MCF 10A (cell line): ENCODE measurements at regions of chr2 and their contacts with region 1.

Region 1: GRCh38 chr2:99337113-99338028 is at the start of gene EIF5B:
- DNase-seq: peak; percentile 96
- H3K4me3 Mint-ChIP-seq: no peak within 1 kb of the TSS
- H3K27ac Mint-ChIP-seq: no peak within 1 kb of the TSS
- H3K4me1 Mint-ChIP-seq: peaks cover 20% of the 10 kb centered on the region
- H3K27me3 Mint-ChIP-seq: no peaks in the 10 kb centered on the region
- CTCF ChIP-seq: peak; percentile 42
- total RNA-seq, gene EIF5B: 45.6 and 55.5 TPM in 2 replicates

Region 2: GRCh38 chr2:99032786-99033185 is 304.6 kb before region 1 on chr2:
- CTCF ChIA-PET with region 1: no interaction called
- POLR2A ChIA-PET with region 1: no interaction called
- intact Hi-C with region 1: no loop called
- DNase-seq: peak; percentile 46
- H3K4me3 Mint-ChIP-seq: no peak overlapping the region
- H3K27ac Mint-ChIP-seq: no peak overlapping the region
- H3K4me1 Mint-ChIP-seq: peaks cover 12% of the 10 kb centered on the region
- H3K27me3 Mint-ChIP-seq: no peaks in the 10 kb centered on the region
- CTCF ChIP-seq: no peak

Region 3: GRCh38 chr2:99141110-99142108 is 196.0 kb before region 1 on chr2 and contains the start of gene C2orf15:
- CTCF ChIA-PET with region 1: interaction called, 4 read pairs
- POLR2A ChIA-PET with region 1: interaction called, 53 read pairs
- intact Hi-C with region 1: no loop called
- DNase-seq: peak; percentile 95
- H3K4me3 Mint-ChIP-seq: peak within 1 kb of the TSS; percentile 99
- H3K27ac Mint-ChIP-seq: peak within 1 kb of the TSS; percentile 92
- H3K4me1 Mint-ChIP-seq: peaks cover 8% of the 10 kb centered on the region
- H3K27me3 Mint-ChIP-seq: no peaks in the 10 kb centered on the region
- CTCF ChIP-seq: no peak
- total RNA-seq, gene C2orf15: 0.74 and 0.93 TPM in 2 replicates

Region 4: GRCh38 chr2:99169534-99169933 is 167.8 kb before region 1 on chr2:
- CTCF ChIA-PET with region 1: no interaction called
- POLR2A ChIA-PET with region 1: interaction called, 14 read pairs
- intact Hi-C with region 1: no loop called
- DNase-seq: no peak
- H3K4me3 Mint-ChIP-seq: no peak overlapping the region
- H3K27ac Mint-ChIP-seq: no peak overlapping the region
- H3K4me1 Mint-ChIP-seq: no peaks in the 10 kb centered on the region
- H3K27me3 Mint-ChIP-seq: no peaks in the 10 kb centered on the region
- CTCF ChIP-seq: no peak

Region 5: GRCh38 chr2:99188357-99188756 is 149.0 kb before region 1 on chr2:
- CTCF ChIA-PET with region 1: interaction called, 4 read pairs
- POLR2A ChIA-PET with region 1: interaction called, 154 read pairs
- intact Hi-C with region 1: no loop called
- DNase-seq: no peak
- H3K4me3 Mint-ChIP-seq: no peak overlapping the region
- H3K27ac Mint-ChIP-seq: no peak overlapping the region
- H3K4me1 Mint-ChIP-seq: peaks cover 6% of the 10 kb centered on the region
- H3K27me3 Mint-ChIP-seq: no peaks in the 10 kb centered on the region
- CTCF ChIP-seq: no peak

Region 6: GRCh38 chr2:99348173-99348572 is 10.8 kb after region 1 on chr2:
- CTCF ChIA-PET with region 1: interaction called, 8 read pairs
- POLR2A ChIA-PET with region 1: interaction called, 23 read pairs
- intact Hi-C with region 1: no loop called
- DNase-seq: no peak
- H3K4me3 Mint-ChIP-seq: no peak overlapping the region
- H3K27ac Mint-ChIP-seq: peak overlapping the region; percentile 44
- H3K4me1 Mint-ChIP-seq: peaks cover 10% of the 10 kb centered on the region
- H3K27me3 Mint-ChIP-seq: no peaks in the 10 kb centered on the region
- CTCF ChIP-seq: no peak

Region 7: DNA sequence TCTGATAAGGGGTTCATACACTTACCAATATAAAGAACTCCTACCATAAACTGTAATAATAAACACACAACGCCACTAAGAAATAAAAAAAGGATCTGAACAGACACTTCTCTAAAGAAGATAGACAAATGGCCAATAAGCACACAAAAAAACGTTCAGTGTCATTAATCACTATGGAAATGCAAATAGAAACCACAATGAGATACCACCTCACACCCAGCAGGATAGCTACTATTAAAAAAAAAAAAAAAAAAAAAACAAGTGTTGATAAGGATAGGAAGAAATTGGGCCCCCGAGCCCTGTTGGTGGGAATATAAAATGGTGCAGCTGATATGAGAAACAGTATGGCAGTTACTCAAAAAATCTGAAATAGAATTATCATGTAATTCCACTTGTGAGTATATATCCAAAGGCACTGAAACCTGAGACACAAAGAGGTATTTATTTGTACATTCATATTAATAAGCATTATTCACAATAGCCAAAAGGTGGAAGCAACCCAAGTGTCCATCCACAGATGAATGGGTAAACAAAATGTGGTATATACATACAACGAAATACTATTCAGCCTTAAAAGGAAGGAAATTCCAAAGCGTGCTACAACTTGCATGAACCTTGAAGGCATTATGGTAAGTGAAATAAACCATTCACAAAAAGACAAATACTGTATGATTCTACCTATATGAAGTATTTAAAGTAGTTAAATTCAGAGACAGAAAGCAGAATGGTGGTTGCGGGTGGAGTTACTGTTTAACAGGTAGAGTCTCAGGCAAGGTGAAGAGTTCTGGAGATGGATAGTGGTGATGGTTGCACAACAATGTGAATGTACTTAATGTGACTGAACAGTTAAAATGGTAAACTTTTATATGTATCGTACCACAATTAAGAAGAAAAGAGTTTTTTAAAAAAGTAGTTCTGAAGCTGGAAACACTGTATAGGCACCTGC is 134.6 kb after region 1 on chr2:
- CTCF ChIA-PET with region 1: no interaction called
- POLR2A ChIA-PET with region 1: interaction called, 15 read pairs
- intact Hi-C with region 1: no loop called
- DNase-seq: peak; percentile 54
- H3K4me3 Mint-ChIP-seq: peak overlapping the region; percentile 21
- H3K27ac Mint-ChIP-seq: peak overlapping the region; percentile 73
- H3K4me1 Mint-ChIP-seq: peaks cover 33% of the 10 kb centered on the region
- H3K27me3 Mint-ChIP-seq: no peaks in the 10 kb centered on the region
- CTCF ChIP-seq: no peak

Region 8: GRCh38 chr2:99489761-99490622 is 152.6 kb after region 1 on chr2 and contains the start of gene REV1:
- CTCF ChIA-PET with region 1: interaction called, 3 read pairs
- POLR2A ChIA-PET with region 1: interaction called, 25 read pairs
- intact Hi-C with region 1: loop called (anchors 1 kb)
- DNase-seq: peak; percentile 92
- H3K4me3 Mint-ChIP-seq: peak within 1 kb of the TSS; percentile 89
- H3K27ac Mint-ChIP-seq: peak within 1 kb of the TSS; percentile 93
- H3K4me1 Mint-ChIP-seq: peaks cover 15% of the 10 kb centered on the region
- H3K27me3 Mint-ChIP-seq: no peaks in the 10 kb centered on the region
- CTCF ChIP-seq: peak; percentile 46
- total RNA-seq, gene REV1: 33.2 and 38.6 TPM in 2 replicates